ENCODE measurements at regions of chr12 and their contacts with region 1.

Region 1: GRCh38 chr12:90978117-90978770 is 23.3 kb upstream of the CCER1 start:
- DNase-seq: no peak
- ATAC-seq: peak; percentile 66 to 87 (median 72)
- H3K4me3 ChIP-seq: no peak overlapping the region
- H3K27ac ChIP-seq: peak overlapping the region in 7 of 12 donors; percentile 1 to 61 (median 42)
- H3K4me1 ChIP-seq: peaks cover 0 to 17% (median 0%) of the 10 kb centered on the region in 12 donors
- H3K27me3 ChIP-seq: no peaks in the 10 kb centered on the region
- CTCF ChIP-seq: peak; percentile 36 to 76 (median 67)
- POLR2A ChIP-seq: no peak

Region 2: GRCh38 chr12:90870971-90871725 is 107.1 kb before region 1 on chr12:
- intact Hi-C with region 1: no loop called
- DNase-seq: no peak
- ATAC-seq: no peak
- H3K4me3 ChIP-seq: no peak overlapping the region
- H3K27ac ChIP-seq: no peak overlapping the region
- H3K4me1 ChIP-seq: no peaks in the 10 kb centered on the region
- H3K27me3 ChIP-seq: no peaks in the 10 kb centered on the region
- CTCF ChIP-seq: no peak
- POLR2A ChIP-seq: no peak

Region 3: DNA sequence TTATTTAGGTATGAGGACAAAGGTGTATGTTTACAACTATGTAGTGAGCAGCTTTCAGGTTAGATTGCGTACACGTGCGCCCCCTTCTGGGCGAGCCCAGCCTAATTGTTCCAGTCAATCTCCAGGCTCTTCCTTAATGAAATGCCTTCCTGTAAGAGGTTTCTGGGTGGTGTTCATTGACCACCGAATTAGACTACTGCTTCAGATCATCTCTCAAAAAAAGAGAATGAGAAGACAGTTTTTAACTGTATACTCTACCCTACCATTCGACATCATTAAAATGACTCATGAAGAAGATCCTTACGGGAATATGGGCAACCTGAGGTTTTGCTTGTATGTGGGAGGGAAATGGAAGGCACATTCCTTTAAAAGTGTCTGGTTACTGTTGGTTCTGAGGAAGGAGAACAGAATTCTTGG is 130.9 kb after region 1 on chr12:
- intact Hi-C with region 1: loop called in 8 of 10 experiments (anchors 2 to 10 kb)
- DNase-seq: peak; percentile 50 to 78 (median 63)
- ATAC-seq: peak; percentile 69 to 83 (median 79)
- H3K4me3 ChIP-seq: peak overlapping the region in 9 of 12 donors; percentile 18 to 64 (median 44)
- H3K27ac ChIP-seq: peak overlapping the region in 8 of 12 donors; percentile 6 to 77 (median 52)
- H3K4me1 ChIP-seq: peaks cover 0 to 2% (median 0%) of the 10 kb centered on the region in 12 donors
- H3K27me3 ChIP-seq: no peaks in the 10 kb centered on the region
- CTCF ChIP-seq: peak; percentile 33 to 85 (median 66)
- POLR2A ChIP-seq: no peak

Region 4: GRCh38 chr12:91178139-91178561 is 199.9 kb after region 1 on chr12:
- intact Hi-C with region 1: loop called in 2 of 10 experiments (anchors 10 kb)
- DNase-seq: peak in 3 of 5 donors; percentile 8 to 24 (median 22)
- ATAC-seq: peak in 3 of 4 donors; percentile 50 to 56 (median 55)
- H3K4me3 ChIP-seq: peak overlapping the region in 10 of 12 donors; percentile 17 to 61 (median 48)
- H3K27ac ChIP-seq: peak overlapping the region; percentile 50 to 87 (median 75)
- H3K4me1 ChIP-seq: no peaks in the 10 kb centered on the region
- H3K27me3 ChIP-seq: no peaks in the 10 kb centered on the region
- CTCF ChIP-seq: peak in 9 of 12 donors; percentile 7 to 64 (median 44)
- POLR2A ChIP-seq: no peak

Region 5: DNA sequence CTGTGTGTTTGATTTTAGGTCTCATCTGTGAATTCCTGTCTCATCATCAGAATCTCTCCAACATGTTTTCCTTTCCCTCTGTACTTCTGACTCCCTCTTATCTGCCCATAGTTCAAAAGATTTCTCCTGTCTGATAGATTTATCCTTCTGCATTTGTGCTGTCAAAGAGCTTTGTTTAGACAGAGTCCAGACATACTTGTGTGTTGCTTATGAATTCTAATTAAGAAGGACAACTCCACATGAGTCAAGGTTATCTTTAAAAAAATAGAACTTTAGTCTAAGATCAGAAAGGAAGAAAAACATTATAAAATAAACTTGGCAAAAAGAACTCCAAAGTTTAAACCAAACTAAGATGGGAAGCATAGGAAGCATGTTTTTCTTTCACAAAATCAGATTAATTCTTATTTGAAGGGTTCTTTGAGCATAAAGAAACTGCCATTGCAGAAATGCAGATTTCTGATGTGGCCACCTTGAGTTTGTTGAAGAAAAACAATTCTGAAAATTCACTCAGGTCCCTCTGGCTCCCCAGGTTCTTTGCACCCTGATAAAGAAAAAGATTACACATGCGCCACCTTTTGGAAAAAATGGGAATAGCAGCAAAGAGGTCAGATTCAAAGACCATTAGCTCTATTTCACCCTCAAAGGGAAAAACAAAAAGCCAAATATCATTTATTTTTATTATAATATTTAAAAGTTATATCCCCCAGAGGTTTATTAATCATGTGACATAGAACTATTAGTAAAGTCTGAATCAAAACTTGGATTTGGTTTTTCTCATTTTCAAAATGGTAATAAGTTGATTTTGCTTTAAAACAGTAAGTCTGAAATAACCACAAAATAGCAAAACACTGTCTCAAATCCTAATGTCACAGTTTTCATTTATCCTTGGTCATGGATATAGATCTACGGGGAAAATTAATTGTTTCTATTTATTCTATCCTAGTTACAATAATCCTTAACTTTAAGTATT is 348.1 kb after region 1 on chr12:
- intact Hi-C with region 1: loop called in 5 of 10 experiments (anchors 2 to 10 kb)
- DNase-seq: peak in 2 of 5 donors; percentile 37 to 47
- ATAC-seq: peak in 2 of 4 donors; percentile 62 to 65
- H3K4me3 ChIP-seq: peak overlapping the region in 4 of 12 donors; percentile 4 to 17 (median 14)
- H3K27ac ChIP-seq: peak overlapping the region in 9 of 12 donors; percentile 13 to 70 (median 56)
- H3K4me1 ChIP-seq: peaks cover 0 to 10% (median 0%) of the 10 kb centered on the region in 12 donors
- H3K27me3 ChIP-seq: no peaks in the 10 kb centered on the region
- CTCF ChIP-seq: peak; percentile 56 to 85 (median 72)
- POLR2A ChIP-seq: no peak

Region 6: GRCh38 chr12:91332302-91332701 is 354.1 kb after region 1 on chr12:
- intact Hi-C with region 1: loop called in 5 of 10 experiments (anchors 2 to 10 kb)
- DNase-seq: no peak
- ATAC-seq: no peak
- H3K4me3 ChIP-seq: no peak overlapping the region
- H3K27ac ChIP-seq: no peak overlapping the region
- H3K4me1 ChIP-seq: peaks cover 0 to 10% (median 0%) of the 10 kb centered on the region in 12 donors
- H3K27me3 ChIP-seq: no peaks in the 10 kb centered on the region
- CTCF ChIP-seq: peak in 4 of 12 donors; percentile 26 to 45 (median 32)
- POLR2A ChIP-seq: no peak

Region 7: GRCh38 chr12:91349476-91349875 is 371.2 kb after region 1 on chr12:
- intact Hi-C with region 1: loop called in 4 of 10 experiments (anchors 2 to 5 kb)
- DNase-seq: no peak
- ATAC-seq: no peak
- H3K4me3 ChIP-seq: no peak overlapping the region
- H3K27ac ChIP-seq: no peak overlapping the region
- H3K4me1 ChIP-seq: peaks cover 0 to 4% (median 0%) of the 10 kb centered on the region in 12 donors
- H3K27me3 ChIP-seq: no peaks in the 10 kb centered on the region
- CTCF ChIP-seq: no peak
- POLR2A ChIP-seq: no peak

Region 8: GRCh38 chr12:91355150-91356006 is 377.1 kb after region 1 on chr12:
- intact Hi-C with region 1: loop called in 8 of 10 experiments (anchors 1 to 5 kb)
- DNase-seq: peak; percentile 43 to 67 (median 61)
- ATAC-seq: peak; percentile 71 to 96 (median 90)
- H3K4me3 ChIP-seq: no peak overlapping the region
- H3K27ac ChIP-seq: no peak overlapping the region
- H3K4me1 ChIP-seq: no peaks in the 10 kb centered on the region
- H3K27me3 ChIP-seq: no peaks in the 10 kb centered on the region
- CTCF ChIP-seq: peak; percentile 59 to 89 (median 78)
- POLR2A ChIP-seq: no peak